CD8-positive, alpha-beta T cell (primary cell): ENCODE measurements at regions of chrX and their contacts with region 1.

Region 1: DNA sequence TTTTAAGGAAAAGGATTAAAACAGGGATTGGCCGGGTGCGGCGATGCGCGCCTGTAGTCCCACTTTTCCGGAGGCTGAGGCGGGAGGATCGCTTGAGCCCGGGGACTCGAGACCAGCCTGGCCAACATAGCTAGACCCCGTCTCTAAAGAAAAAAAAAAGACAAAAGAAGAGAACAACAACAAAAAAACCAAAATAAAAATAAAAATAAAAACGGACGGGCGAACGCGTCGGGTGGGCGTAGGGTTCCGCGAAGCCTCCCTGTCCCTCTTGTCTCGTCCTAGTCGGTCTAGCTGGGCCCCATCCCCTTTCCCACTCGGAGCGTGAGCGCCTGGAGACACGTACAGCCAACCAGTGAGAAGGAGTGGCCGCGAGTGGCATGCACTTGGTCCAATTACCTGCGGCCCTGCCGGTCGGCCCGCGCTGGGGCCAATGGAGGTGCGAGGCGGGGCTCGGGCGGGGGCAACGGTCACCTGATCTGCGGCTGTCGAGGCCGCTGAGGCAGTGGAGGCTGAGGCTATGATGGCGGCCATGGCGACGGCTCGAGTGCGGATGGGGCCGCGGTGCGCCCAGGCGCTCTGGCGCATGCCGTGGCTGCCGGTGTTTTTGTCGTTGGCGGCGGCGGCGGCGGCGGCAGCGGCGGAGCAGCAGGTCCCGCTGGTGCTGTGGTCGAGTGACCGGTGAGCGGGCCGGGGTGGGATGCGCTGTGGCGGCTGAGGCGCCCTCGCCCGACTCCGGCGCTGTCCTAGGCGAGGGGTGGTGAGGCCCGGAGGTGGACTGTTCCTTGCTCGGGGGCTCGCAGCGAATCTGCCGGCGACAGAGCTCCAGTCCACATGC is at the start of gene ATP6AP1:
- DNase-seq: peak; percentile 71 to 94 (median 86)
- ATAC-seq: peak; percentile 97
- H3K4me3 ChIP-seq: peak within 1 kb of the TSS; percentile 63 to 67
- H3K4me3 Mint-ChIP-seq: peak within 1 kb of the TSS; percentile 82
- H3K27ac ChIP-seq: peak within 1 kb of the TSS; percentile 45 to 63
- H3K27ac Mint-ChIP-seq: peak within 1 kb of the TSS; percentile 86
- H3K4me1 ChIP-seq: peaks cover 12% of the 10 kb centered on the region
- H3K4me1 Mint-ChIP-seq: peaks cover 27% of the 10 kb centered on the region
- H3K27me3 ChIP-seq: no peaks in the 10 kb centered on the region
- H3K27me3 Mint-ChIP-seq: no peaks in the 10 kb centered on the region
- CTCF ChIP-seq: no peak
- total RNA-seq, gene ATP6AP1: 31.2 to 32.4 TPM

Region 2: DNA sequence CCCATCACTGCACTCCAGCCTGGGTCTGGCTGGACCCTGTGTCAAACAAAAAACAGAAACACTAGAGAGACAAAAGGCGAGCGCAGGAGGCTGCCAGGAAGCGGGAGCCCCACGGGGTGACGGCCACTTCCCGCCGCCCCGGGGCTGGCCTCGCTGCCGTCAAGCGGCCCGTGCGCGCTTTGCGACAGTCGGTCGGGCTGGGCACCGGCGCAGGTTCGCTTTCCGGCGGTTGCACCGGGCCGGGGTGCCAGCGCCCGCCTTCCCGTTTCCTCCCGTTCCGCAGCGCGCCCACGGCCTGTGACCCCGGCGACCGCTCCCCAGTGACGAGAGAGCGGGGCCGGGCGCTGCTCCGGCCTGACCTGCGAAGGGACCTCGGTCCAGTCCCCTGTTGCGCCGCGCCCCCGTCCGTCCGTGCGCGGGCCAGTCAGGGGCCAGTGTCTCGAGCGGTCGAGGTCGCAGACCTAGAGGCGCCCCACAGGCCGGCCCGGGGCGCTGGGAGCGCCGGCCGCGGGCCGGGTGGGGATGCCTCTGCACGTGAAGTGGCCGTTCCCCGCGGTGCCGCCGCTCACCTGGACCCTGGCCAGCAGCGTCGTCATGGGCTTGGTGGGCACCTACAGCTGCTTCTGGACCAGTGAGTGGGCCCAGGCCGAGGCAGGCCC is 16.9 kb before region 1 on chrX and contains the start of gene TAFAZZIN:
- CTCF ChIA-PET with region 1: interaction called, 4 read pairs
- POLR2A ChIA-PET with region 1: interaction called, 10 read pairs
- intact Hi-C with region 1: loop called in 1 of 2 experiments (anchors 2 kb)
- DNase-seq: peak; percentile 37 to 87 (median 70)
- ATAC-seq: peak; percentile 79
- H3K4me3 ChIP-seq: peak within 1 kb of the TSS; percentile 49 to 68
- H3K4me3 Mint-ChIP-seq: peak within 1 kb of the TSS; percentile 91
- H3K27ac ChIP-seq: peak within 1 kb of the TSS; percentile 55 to 73
- H3K27ac Mint-ChIP-seq: peak within 1 kb of the TSS; percentile 94
- H3K4me1 ChIP-seq: peaks cover 9% of the 10 kb centered on the region
- H3K4me1 Mint-ChIP-seq: peaks cover 6% of the 10 kb centered on the region
- H3K27me3 ChIP-seq: no peaks in the 10 kb centered on the region
- H3K27me3 Mint-ChIP-seq: no peaks in the 10 kb centered on the region
- CTCF ChIP-seq: no peak
- total RNA-seq, gene TAFAZZIN: 48.9 to 52.3 TPM